Left ventricle myocardium inferior (tissue), 1 donor: ENCODE measurements at regions of chrX and their contacts with region 1.

Region 1: DNA sequence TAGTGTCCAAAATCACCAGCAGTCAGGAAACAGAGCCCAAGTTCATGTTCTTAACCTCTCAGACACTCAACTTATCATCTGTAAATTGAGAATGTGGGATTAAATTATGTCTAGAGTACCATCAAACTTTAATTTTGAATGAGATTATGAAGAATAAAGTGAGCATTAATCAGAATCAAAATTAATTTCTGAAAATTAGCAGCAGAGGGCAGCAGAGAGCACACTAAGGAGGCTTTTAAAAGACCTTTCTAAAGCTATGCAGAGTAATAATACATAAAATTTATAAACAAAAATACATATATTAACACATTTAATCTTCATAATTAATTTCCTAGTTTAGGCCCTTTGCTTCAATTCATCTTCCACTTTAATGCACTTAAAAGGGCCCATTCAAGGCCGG is 7.1 kb downstream of the TASL start:
- DNase-seq: no peak
- H3K4me3 ChIP-seq: no peak overlapping the region
- H3K27ac ChIP-seq: no peak overlapping the region
- H3K4me1 ChIP-seq: no peaks in the 10 kb centered on the region
- H3K27me3 ChIP-seq: no peaks in the 10 kb centered on the region
- CTCF ChIP-seq: peak; percentile 60

Region 2: GRCh38 chrX:30713061-30713525 is 142.6 kb after region 1 on chrX:
- intact Hi-C with region 1: loop called (anchors 10 kb)
- DNase-seq: peak; percentile 18
- H3K4me3 ChIP-seq: no peak overlapping the region
- H3K27ac ChIP-seq: no peak overlapping the region
- H3K4me1 ChIP-seq: no peaks in the 10 kb centered on the region
- H3K27me3 ChIP-seq: no peaks in the 10 kb centered on the region
- CTCF ChIP-seq: peak; percentile 59